ENCODE measurements at regions of chr1 and their contacts with region 1.

Region 1: DNA sequence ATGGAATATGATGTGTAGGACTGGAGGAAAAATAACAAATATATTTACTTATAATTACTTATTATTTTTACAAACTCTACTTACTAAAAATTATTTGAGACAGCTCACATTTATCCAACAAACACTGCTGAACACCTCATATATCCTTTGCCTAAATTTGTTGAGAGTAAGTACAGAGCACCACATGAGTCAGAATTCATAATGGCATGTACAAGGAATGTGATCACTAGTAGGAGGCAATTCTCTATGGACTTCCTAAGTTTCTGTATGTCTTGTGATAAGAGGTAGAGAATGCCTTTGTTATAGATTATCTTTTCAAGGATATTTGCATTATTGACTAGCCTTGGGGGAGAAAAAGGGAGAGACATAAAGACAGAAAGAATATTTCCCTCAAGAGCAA is 8.2 kb upstream of the ST6GALNAC3 start:
- DNase-seq: peak in 1 of 2 experiments; percentile 12
- H3K4me3 ChIP-seq: no peak overlapping the region
- H3K4me3 Mint-ChIP-seq: no peak overlapping the region
- H3K27ac Mint-ChIP-seq: peak overlapping the region; percentile 48
- H3K4me1 ChIP-seq: peaks cover 49% of the 10 kb centered on the region
- H3K4me1 Mint-ChIP-seq: peaks cover 46% of the 10 kb centered on the region
- H3K27me3 ChIP-seq: no peaks in the 10 kb centered on the region
- H3K27me3 Mint-ChIP-seq: no peaks in the 10 kb centered on the region
- CTCF ChIP-seq: no peak

Region 2: GRCh38 chr1:75330624-75331023 is 735.8 kb before region 1 on chr1:
- CTCF ChIA-PET with region 1: no interaction called
- POLR2A ChIA-PET with region 1: no interaction called
- intact Hi-C with region 1: no loop called
- DNase-seq: no peak
- H3K4me3 ChIP-seq: no peak overlapping the region
- H3K4me3 Mint-ChIP-seq: no peak overlapping the region
- H3K27ac Mint-ChIP-seq: no peak overlapping the region
- H3K4me1 ChIP-seq: peaks cover 60% of the 10 kb centered on the region
- H3K4me1 Mint-ChIP-seq: peaks cover 17% of the 10 kb centered on the region
- H3K27me3 ChIP-seq: no peaks in the 10 kb centered on the region
- H3K27me3 Mint-ChIP-seq: no peaks in the 10 kb centered on the region
- CTCF ChIP-seq: no peak

Region 3: GRCh38 chr1:76035053-76035452 is 31.3 kb before region 1 on chr1:
- CTCF ChIA-PET with region 1: no interaction called
- POLR2A ChIA-PET with region 1: no interaction called
- intact Hi-C with region 1: loop called (anchors 2 kb)
- DNase-seq: no peak
- H3K4me3 ChIP-seq: no peak overlapping the region
- H3K4me3 Mint-ChIP-seq: no peak overlapping the region
- H3K27ac Mint-ChIP-seq: no peak overlapping the region
- H3K4me1 ChIP-seq: peaks cover 40% of the 10 kb centered on the region
- H3K4me1 Mint-ChIP-seq: peaks cover 16% of the 10 kb centered on the region
- H3K27me3 ChIP-seq: no peaks in the 10 kb centered on the region
- H3K27me3 Mint-ChIP-seq: no peaks in the 10 kb centered on the region
- CTCF ChIP-seq: no peak

Measured in Caco-2 (cell line).